AG04449 (cell line): ENCODE measurements at regions of chr14 and their contacts with region 1.

Region 1: GRCh38 chr14:101767618-101768362 is 6.3 kb downstream of the PPP2R5C start:
- DNase-seq: no peak
- H3K4me3 ChIP-seq: no peak overlapping the region
- CTCF ChIP-seq: no peak

Region 2: DNA sequence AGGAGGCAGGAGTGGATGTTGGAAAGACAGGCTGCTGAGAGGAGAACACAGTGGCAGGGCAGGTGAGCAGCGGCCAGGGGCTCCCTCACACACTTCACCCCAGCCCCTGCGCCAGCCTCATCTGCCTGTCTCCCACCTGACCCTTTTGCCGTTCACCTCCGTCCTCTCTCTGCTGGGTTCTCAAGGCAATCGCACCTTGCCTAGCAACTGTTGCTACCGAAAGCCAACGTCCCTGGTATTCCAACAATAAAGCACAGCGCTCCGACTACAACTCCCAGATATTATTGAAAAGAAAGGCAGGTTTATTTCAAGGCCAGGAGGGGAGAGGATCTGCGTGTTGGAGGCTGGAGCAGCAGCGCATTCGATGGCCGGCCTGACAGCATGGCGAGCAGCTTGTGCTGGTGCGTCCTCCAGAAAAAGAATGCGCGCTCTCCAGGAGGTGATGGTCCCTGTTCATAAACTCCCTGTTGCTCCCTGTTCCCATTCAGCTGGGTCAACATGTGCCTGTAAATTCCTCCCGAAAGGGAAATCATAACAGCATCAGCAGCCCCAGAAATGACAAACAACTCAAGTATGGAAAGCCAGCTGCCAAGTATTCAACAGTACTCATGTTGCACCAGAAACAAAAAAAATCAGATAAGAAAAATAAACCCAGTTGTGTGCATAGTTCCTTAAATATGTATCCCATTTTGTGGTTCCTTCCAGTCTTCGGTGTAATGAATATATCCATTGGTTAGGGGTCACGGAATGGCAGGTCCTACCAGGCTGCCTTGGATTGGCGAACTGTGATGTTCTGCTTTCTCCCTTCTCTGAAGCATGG is 359.5 kb before region 1 on chr14:
- CTCF ChIA-PET with region 1: no interaction called
- POLR2A ChIA-PET with region 1: no interaction called
- DNase-seq: peak; percentile 31
- H3K4me3 ChIP-seq: no peak overlapping the region
- CTCF ChIP-seq: no peak

Region 3: DNA sequence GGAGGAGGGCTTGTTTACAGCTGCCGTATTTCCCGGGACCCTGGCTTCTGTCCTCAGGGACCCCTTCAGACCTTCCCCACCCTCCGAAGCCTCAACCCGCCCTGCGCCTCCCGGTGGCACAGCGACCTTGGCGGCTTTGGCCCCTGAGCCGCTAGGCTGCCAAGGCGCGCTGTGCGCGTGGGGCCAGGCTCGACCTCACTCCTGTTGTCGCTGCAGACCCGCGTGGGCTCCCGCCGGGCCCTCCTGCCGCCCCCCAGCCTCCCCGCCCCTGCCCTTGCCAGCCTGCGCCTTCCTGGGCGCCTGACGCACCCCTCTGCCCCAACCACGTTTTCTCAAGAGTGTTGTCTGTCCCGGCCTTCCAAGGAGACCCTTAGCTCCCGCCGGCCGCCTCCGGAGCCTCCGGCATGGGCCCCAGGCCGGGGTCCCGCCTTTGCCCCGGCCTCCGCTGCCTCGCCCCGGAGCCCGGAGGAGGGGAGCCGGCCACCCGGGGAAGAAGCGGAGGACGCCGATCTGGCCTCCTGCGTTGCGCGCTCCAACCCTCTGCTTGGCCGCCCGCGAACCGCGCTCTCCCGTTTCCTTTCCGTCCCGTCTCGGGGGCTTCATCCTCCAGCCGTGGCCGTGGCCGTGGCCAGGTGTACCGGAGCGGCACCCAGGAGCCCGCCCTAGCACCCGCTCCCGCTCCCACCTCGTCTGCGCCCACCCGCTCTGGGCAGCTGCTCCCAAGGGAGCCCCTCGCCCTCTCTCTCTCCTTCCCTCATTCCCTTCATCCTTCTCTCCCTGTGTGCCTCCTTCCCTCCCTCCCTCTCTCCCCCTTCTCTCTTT is 13.7 kb after region 1 on chr14:
- CTCF ChIA-PET with region 1: interaction called, 15 read pairs
- POLR2A ChIA-PET with region 1: interaction called, 4 read pairs
- DNase-seq: no peak
- H3K4me3 ChIP-seq: peak overlapping the region; percentile 51
- CTCF ChIP-seq: no peak

Region 4: GRCh38 chr14:101865288-101865687 is 97.5 kb after region 1 on chr14:
- CTCF ChIA-PET with region 1: interaction called, 19 read pairs
- POLR2A ChIA-PET with region 1: no interaction called
- DNase-seq: no peak
- H3K4me3 ChIP-seq: no peak overlapping the region
- CTCF ChIP-seq: no peak

Region 5: GRCh38 chr14:101927859-101928258 is 160.1 kb after region 1 on chr14:
- CTCF ChIA-PET with region 1: interaction called, 23 read pairs
- POLR2A ChIA-PET with region 1: no interaction called
- DNase-seq: peak; percentile 79
- H3K4me3 ChIP-seq: no peak overlapping the region
- CTCF ChIP-seq: no peak

Region 6: GRCh38 chr14:101964297-101965144 is 196.7 kb after region 1 on chr14 and contains the start of gene DYNC1H1:
- CTCF ChIA-PET with region 1: interaction called, 93 read pairs
- POLR2A ChIA-PET with region 1: no interaction called
- DNase-seq: no peak
- H3K4me3 ChIP-seq: peak within 1 kb of the TSS; percentile 94
- CTCF ChIP-seq: no peak